Right ventricle myocardium inferior (tissue), 1 donor: ENCODE measurements at regions of chr3 and their contacts with region 1.

Region 1: DNA sequence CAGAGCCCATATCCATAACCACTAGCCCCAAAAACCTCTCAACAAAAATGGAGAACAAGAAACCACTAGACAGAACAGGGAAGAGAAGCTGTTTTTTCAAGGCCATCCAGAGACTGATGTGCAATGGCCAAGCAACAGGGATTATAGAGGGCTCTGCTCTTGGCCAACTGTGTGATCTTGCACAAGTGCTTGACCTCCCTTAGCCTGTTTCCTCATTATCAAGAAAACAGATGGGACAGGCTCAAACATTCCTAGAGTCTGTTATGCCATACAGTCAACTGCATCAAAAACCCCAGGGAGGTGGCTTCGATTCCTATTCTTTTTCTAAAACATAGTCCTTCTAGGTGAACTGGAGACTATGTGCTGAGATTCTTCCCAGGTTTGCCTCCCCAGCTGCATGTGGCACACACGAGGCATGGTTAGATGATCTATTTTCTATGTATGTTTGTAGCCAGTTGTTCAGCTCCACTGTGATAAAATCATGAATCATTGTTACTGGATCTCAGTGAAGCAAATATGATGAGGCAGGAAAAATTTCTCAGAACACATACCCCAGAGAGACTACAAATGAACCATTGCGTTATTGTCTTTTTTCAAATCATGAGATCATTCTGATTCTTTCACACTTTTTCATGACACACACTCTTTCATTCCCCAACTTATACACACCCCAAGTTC is 132.9 kb upstream of the TGFBR2 start:
- DNase-seq: no peak
- ATAC-seq: peak; percentile 95

Region 2: GRCh38 chr3:30511524-30512278 is 38.2 kb after region 1 on chr3:
- intact Hi-C with region 1: loop called (anchors 5 kb)
- DNase-seq: peak; percentile 66
- ATAC-seq: peak; percentile 92